Activated naive CD4-positive, alpha-beta T cell treated with anti-CD3 and anti-CD28 coated beads for 36 hours (primary cell): ENCODE measurements at regions of chr3 and their contacts with region 1.

Region 1: GRCh38 chr3:56616479-56617006 is 59.6 kb downstream of the CCDC66 start:
- DNase-seq: no peak
- H3K4me3 Mint-ChIP-seq: no peak overlapping the region
- H3K27ac Mint-ChIP-seq: peak overlapping the region; percentile 46
- H3K4me1 Mint-ChIP-seq: peaks cover 31% of the 10 kb centered on the region
- H3K27me3 Mint-ChIP-seq: no peaks in the 10 kb centered on the region

Region 2: GRCh38 chr3:56645407-56645806 is 28.9 kb after region 1 on chr3:
- CTCF ChIA-PET with region 1: no interaction called
- intact Hi-C with region 1: loop called (anchors 2 kb)
- DNase-seq: no peak
- H3K4me3 Mint-ChIP-seq: no peak overlapping the region
- H3K27ac Mint-ChIP-seq: no peak overlapping the region
- H3K4me1 Mint-ChIP-seq: peaks cover 24% of the 10 kb centered on the region
- H3K27me3 Mint-ChIP-seq: no peaks in the 10 kb centered on the region

Region 3: DNA sequence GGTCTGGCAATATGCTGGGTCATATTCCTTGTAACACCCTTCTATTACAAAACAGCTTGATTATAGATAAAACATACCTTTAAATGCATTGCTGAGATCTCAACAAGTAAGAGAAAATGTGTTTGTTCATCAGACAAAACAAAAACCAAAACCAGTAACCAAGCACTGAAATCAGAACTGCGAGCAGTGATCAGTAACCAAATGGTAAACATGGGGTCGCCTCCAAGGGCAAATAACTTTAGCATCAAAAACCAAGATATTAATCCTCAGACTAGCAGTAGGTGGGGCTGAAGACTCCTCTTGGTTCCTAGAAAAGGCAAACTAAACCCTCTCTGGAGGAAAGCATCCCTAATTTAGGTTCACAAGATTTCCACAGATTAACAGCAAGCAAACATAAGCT is 589.9 kb after region 1 on chr3:
- CTCF ChIA-PET with region 1: no interaction called
- intact Hi-C with region 1: no loop called
- DNase-seq: no peak
- H3K4me3 Mint-ChIP-seq: no peak overlapping the region
- H3K27ac Mint-ChIP-seq: no peak overlapping the region
- H3K4me1 Mint-ChIP-seq: no peaks in the 10 kb centered on the region
- H3K27me3 Mint-ChIP-seq: no peaks in the 10 kb centered on the region